GM12878 (cell line): ENCODE measurements at regions of chr5 and their contacts with region 1.

Region 1: DNA sequence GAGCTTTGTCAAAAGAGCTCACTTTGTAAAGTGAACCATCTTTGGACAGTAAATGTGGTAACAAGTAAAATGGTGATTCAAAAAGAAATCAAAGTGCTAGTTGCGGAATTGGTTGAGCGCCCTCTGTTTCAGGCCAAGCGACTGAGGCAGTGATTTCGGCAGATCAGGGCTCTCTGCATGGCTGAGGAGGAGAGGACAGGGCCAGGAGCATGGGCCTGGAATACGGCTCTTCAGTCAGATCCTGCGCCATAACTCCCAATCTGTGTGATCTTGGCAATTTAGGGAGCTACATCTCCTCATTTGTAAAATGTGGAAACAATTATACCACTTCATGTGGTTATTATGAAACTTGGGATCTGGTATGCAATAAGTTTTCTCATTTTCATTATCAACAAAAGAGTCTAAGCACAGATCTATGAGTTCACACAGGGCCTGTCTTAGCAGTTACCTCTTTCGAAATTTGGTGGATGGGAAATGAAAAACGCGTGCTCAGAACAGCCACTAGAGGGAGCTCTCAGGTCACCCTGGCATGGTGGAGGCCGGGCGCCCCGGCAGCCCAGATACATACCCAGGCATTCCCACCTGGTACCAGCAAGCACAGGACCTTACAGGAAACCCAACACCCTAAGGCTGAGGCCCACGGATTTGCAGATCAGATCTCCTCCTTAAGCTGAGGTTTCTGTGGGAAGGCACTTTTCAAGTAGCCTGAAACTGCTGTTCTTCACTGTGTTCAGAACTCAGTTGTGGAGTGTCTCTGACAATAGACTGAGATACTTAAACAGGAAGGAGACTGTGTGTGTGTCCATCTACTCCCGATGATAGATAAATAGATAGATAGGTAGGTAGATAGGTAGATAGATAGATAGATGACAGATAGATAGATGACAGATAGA is 303.7 kb downstream of the RAB3C start:
- DNase-seq: no peak
- ATAC-seq: peak; percentile 71
- H3K4me3 ChIP-seq: no peak overlapping the region
- H3K27ac ChIP-seq: no peak overlapping the region
- H3K4me1 ChIP-seq: no peaks in the 10 kb centered on the region; the same call in 1 of the 2 replicates
- H3K27me3 ChIP-seq: no peaks in the 10 kb centered on the region
- CTCF ChIP-seq: peak; percentile 86 to 89 (median 87)
- EP300 ChIP-seq: no peak
- POLR2A ChIP-seq: no peak
- RAD21 ChIP-seq: peak; percentile 74

Region 2: DNA sequence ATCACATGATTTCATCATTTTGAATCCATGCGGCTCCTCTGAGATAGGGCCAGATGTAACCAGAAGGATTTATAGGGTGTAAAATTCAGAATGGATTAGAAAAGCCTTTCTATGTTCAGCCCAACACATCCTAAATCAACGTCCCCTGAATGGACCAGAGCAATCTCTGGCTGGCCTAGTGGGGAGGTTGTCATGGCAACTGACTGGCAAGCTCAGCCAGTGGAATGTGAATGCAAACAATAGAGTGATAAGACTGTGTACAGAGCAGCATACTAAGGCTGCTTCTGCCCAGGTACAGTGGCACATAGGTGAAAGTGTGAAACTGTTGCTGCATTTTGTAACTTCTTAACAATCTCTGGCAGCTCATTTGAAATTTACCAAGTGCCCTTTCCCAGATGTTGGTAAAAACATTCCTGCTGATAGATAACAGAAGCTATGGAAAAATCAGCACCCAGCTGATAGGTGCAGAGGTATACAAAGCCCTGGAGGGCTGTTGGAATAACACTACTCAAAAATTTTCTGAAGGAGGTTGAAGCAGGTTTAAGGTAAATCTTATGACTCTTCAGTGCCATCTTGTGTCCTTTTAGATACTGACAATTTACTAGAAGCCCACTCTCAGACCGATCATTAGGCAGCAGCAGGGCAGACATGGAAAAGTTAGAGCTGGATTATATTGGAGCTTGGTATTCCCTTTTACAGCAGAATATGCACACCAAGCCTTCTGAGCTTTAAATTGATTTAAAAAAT is 36.5 kb before region 1 on chr5:
- CTCF ChIA-PET with region 1: interaction called, 10 read pairs
- POLR2A ChIA-PET with region 1: no interaction called
- RAD21 ChIA-PET with region 1: interaction called, 3 read pairs
- SMC1A ChIA-PET with region 1: interaction called, 6 read pairs
- in situ Hi-C with region 1: no loop called
- intact Hi-C with region 1: no loop called
- DNase-seq: no peak
- ATAC-seq: peak; percentile 75
- H3K4me3 ChIP-seq: no peak overlapping the region
- H3K27ac ChIP-seq: no peak overlapping the region
- H3K4me1 ChIP-seq: no peaks in the 10 kb centered on the region
- H3K27me3 ChIP-seq: no peaks in the 10 kb centered on the region
- CTCF ChIP-seq: peak; percentile 33 to 57 (median 41); a peak in 4 of 6 replicates
- EP300 ChIP-seq: no peak
- POLR2A ChIP-seq: no peak
- RAD21 ChIP-seq: peak; percentile 52

Region 3: GRCh38 chr5:58902765-58903164 is 16.2 kb after region 1 on chr5:
- CTCF ChIA-PET with region 1: interaction called, 25 read pairs
- POLR2A ChIA-PET with region 1: no interaction called
- RAD21 ChIA-PET with region 1: interaction called, 5 read pairs
- SMC1A ChIA-PET with region 1: interaction called, 4 read pairs
- in situ Hi-C with region 1: no loop called
- intact Hi-C with region 1: no loop called
- DNase-seq: no peak
- ATAC-seq: no peak
- H3K4me3 ChIP-seq: no peak overlapping the region
- H3K27ac ChIP-seq: no peak overlapping the region
- H3K4me1 ChIP-seq: no peaks in the 10 kb centered on the region
- H3K27me3 ChIP-seq: no peaks in the 10 kb centered on the region; a peak in 2 of 4 replicates
- CTCF ChIP-seq: no peak
- EP300 ChIP-seq: no peak
- POLR2A ChIP-seq: no peak
- RAD21 ChIP-seq: no peak

Region 4: DNA sequence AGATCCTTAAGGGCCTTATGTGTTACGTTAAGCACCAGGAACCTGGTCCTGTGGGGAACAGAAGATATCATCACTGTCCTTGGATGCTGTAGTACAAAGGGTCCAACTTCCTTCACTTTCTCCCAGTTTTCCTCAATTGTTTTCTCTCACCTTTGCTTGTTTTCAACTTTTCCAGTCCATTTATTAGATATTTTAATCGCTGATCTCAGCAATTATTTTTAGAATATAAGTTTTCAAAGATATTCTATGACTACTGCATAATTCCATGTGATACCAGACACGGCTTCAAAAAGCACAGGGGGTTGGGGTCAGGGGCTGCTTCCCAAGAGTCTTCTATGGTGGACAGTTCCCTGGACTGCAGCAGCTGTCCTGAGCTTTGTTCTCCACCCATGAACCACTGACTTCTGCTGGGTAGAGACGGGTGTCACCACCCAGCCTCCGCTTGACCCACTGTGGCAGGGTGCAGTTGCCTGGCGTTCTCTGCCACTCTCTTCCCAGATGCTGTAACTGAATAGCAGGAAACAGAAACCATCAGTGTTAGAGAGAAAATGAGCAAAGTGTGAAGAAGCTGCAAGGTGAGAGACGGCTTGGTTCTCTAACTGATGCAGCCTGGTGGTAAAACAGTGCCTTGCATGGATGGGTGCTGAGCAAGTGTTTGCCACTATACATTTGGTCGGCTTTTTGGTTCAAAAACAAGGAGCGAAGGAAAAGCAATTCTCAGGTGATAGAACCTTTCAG is 79.3 kb after region 1 on chr5:
- CTCF ChIA-PET with region 1: interaction called, 12 read pairs
- POLR2A ChIA-PET with region 1: no interaction called
- RAD21 ChIA-PET with region 1: interaction called, 6 read pairs
- SMC1A ChIA-PET with region 1: interaction called, 5 read pairs
- in situ Hi-C with region 1: no loop called
- intact Hi-C with region 1: no loop called
- DNase-seq: no peak
- ATAC-seq: peak; percentile 55
- H3K4me3 ChIP-seq: no peak overlapping the region
- H3K27ac ChIP-seq: no peak overlapping the region
- H3K4me1 ChIP-seq: peaks cover 7% of the 10 kb centered on the region; the same call in 1 of the 2 replicates
- H3K27me3 ChIP-seq: no peaks in the 10 kb centered on the region
- CTCF ChIP-seq: no peak
- EP300 ChIP-seq: no peak
- POLR2A ChIP-seq: no peak
- RAD21 ChIP-seq: no peak

Region 5: GRCh38 chr5:59007460-59008063 is 121.0 kb after region 1 on chr5:
- CTCF ChIA-PET with region 1: interaction called, 79 read pairs
- POLR2A ChIA-PET with region 1: interaction called, 3 read pairs
- RAD21 ChIA-PET with region 1: interaction called, 39 read pairs
- SMC1A ChIA-PET with region 1: interaction called, 43 read pairs
- in situ Hi-C with region 1: loop called (anchors 5 kb)
- intact Hi-C with region 1: loop called (anchors 1 kb)
- DNase-seq: no peak
- ATAC-seq: peak; percentile 57
- H3K4me3 ChIP-seq: no peak overlapping the region
- H3K27ac ChIP-seq: no peak overlapping the region
- H3K4me1 ChIP-seq: no peaks in the 10 kb centered on the region
- H3K27me3 ChIP-seq: no peaks in the 10 kb centered on the region
- CTCF ChIP-seq: peak in 1 of 3 experiments; percentile 20; a peak in 1 of 6 replicates
- EP300 ChIP-seq: no peak
- POLR2A ChIP-seq: no peak
- RAD21 ChIP-seq: peak; percentile 62

Region 6: GRCh38 chr5:59174248-59174844 is 287.8 kb after region 1 on chr5:
- CTCF ChIA-PET with region 1: interaction called, 33 read pairs
- POLR2A ChIA-PET with region 1: interaction called, 4 read pairs
- RAD21 ChIA-PET with region 1: interaction called, 10 read pairs
- SMC1A ChIA-PET with region 1: interaction called, 33 read pairs
- in situ Hi-C with region 1: no loop called
- intact Hi-C with region 1: loop called (anchors 1 kb)
- DNase-seq: no peak
- ATAC-seq: peak; percentile 83
- H3K4me3 ChIP-seq: no peak overlapping the region
- H3K27ac ChIP-seq: no peak overlapping the region
- H3K4me1 ChIP-seq: peaks cover 16% of the 10 kb centered on the region
- H3K27me3 ChIP-seq: no peaks in the 10 kb centered on the region
- CTCF ChIP-seq: peak; percentile 57 to 73 (median 70)
- EP300 ChIP-seq: no peak
- POLR2A ChIP-seq: no peak
- RAD21 ChIP-seq: peak; percentile 84

Region 7: DNA sequence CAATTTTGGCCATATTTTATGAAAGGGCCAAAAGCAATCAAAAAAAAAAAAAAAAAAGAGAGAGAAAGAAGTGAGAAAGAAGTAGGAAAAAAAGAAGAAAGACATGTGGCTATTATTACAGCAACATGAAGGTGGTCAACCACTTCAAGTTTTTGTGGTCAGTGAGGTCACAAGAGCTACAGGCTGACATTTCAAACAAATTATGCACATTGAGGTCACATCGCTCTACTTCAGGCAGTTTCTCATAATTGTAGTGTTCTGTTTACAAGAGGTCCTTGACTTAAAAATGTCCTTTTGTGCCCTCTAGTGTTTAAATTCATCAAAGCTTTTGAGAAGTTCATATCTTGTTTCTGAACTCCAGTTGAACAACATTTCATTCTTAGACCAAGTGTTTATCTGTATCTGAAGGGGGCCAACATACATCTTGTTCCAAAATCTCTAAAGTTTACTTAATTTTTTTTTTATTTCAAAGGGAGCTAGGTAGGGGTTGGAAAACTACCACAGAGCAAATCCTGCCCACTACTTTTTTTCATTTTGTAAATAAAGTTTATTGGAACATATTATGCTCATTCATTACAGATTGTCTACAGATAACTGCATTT is 493.9 kb after region 1 on chr5:
- CTCF ChIA-PET with region 1: interaction called, 6 read pairs
- POLR2A ChIA-PET with region 1: no interaction called
- RAD21 ChIA-PET with region 1: interaction called, 7 read pairs
- SMC1A ChIA-PET with region 1: no interaction called
- in situ Hi-C with region 1: loop called (anchors 10 kb)
- intact Hi-C with region 1: loop called (anchors 2 kb)
- DNase-seq: peak; percentile 76
- ATAC-seq: peak; percentile 98
- H3K4me3 ChIP-seq: no peak overlapping the region
- H3K27ac ChIP-seq: no peak overlapping the region
- H3K4me1 ChIP-seq: no peaks in the 10 kb centered on the region
- H3K27me3 ChIP-seq: no peaks in the 10 kb centered on the region; a peak in 1 of 4 replicates
- CTCF ChIP-seq: peak; percentile 29 to 64 (median 53); a peak in 5 of 6 replicates
- EP300 ChIP-seq: peak; percentile 72 to 82; a peak in 3 of 4 replicates
- POLR2A ChIP-seq: no peak
- RAD21 ChIP-seq: peak; percentile 61